Activated CD4-positive, alpha-beta T cell treated with anti-CD3 and anti-CD28 coated beads for 36 hours (primary cell): ENCODE measurements at regions of chr18 and their contacts with region 1.

Region 1: DNA sequence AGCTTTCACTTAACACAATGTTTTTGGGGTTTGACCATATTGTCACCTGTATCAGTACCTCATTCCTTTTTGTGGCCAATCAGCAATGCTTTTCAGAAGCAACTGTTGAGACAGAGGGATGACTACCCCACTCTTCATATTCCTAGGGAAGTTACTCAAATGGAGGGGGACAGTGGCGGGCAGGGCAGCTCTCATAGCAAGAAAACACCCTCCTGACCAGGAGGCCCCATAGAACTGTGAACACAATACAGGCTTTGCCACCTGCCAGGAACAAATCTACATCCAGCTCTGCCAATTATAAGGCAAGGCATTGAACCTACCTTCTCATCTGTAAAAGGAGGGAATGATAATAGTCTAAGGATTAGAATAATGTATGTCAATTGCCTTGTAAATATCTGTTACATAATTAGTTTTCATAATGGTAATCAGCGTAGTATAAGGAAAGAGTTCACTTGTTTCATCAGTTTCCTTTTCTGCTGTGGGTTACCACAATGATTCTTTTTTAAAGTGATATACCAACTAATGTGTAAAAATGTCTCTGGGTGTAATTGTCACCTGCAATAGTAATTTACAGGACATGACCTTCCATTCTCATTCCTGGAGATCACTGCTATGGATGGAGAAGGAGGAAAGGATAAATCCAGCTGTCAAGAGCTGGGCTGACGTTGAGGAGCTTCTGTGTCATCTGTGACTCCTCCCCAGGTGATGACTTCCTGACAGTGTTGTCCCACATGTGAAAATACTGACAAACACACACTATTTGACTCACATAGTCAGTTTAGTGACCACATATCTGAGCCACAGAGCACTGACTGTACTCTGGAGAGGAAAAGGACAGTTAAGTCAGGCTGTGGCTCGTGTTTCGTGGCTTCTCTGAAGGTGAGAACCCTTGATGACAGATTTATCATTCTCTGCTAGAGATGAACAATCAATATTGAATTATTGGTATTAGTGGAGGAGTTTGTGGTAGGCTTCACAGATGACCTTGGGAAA is 13.5 kb downstream of the ALPK2 start:
- DNase-seq: peak; percentile 87
- ATAC-seq: peak; percentile 95
- H3K4me3 Mint-ChIP-seq: peak overlapping the region; percentile 30
- H3K27ac Mint-ChIP-seq: peak overlapping the region; percentile 91
- H3K4me1 Mint-ChIP-seq: peaks cover 46% of the 10 kb centered on the region
- H3K27me3 Mint-ChIP-seq: peaks cover 8% of the 10 kb centered on the region

Region 2: GRCh38 chr18:58135701-58136331 is 479.6 kb before region 1 on chr18:
- CTCF ChIA-PET with region 1: no interaction called
- POLR2A ChIA-PET with region 1: no interaction called
- intact Hi-C with region 1: no loop called
- DNase-seq: peak; percentile 72
- ATAC-seq: peak; percentile 84
- H3K4me3 Mint-ChIP-seq: no peak overlapping the region
- H3K27ac Mint-ChIP-seq: no peak overlapping the region
- H3K4me1 Mint-ChIP-seq: peaks cover 7% of the 10 kb centered on the region
- H3K27me3 Mint-ChIP-seq: peaks cover 7% of the 10 kb centered on the region

Region 3: DNA sequence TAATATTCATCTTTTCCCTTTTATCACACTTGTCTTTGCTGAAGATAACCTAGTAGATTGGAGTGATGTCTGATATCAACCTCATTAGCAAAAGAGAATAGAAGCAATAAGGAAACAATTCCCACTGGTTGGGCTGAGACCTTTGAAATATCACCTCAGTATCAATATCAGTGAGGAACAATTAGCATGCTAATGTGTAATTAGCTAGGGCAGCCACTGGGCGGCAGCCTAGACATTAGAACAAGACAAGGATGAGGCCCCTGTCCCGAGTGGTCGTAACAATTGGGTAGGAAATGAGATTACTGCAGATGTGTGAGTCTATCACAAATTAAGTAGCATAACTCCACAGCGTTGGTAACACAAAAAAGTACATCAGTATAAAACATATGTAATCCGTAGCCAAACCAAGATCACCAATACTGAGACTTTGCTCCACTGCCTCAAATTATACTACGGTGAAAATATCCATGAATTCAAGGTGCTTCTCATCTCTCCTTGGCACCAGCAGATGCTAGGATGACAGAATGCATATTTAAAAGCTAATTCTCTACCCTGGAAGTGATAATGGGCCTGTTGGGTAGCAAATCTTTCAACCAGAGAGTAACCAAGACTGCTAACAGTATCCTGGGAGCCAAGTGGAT is 85.6 kb before region 1 on chr18:
- CTCF ChIA-PET with region 1: no interaction called
- POLR2A ChIA-PET with region 1: interaction called, 3 read pairs
- intact Hi-C with region 1: loop called in 1 of 2 experiments (anchors 5 kb)
- DNase-seq: peak; percentile 83
- ATAC-seq: peak; percentile 39
- H3K4me3 Mint-ChIP-seq: no peak overlapping the region
- H3K27ac Mint-ChIP-seq: no peak overlapping the region
- H3K4me1 Mint-ChIP-seq: peaks cover 30% of the 10 kb centered on the region
- H3K27me3 Mint-ChIP-seq: peaks cover 13% of the 10 kb centered on the region

Region 4: DNA sequence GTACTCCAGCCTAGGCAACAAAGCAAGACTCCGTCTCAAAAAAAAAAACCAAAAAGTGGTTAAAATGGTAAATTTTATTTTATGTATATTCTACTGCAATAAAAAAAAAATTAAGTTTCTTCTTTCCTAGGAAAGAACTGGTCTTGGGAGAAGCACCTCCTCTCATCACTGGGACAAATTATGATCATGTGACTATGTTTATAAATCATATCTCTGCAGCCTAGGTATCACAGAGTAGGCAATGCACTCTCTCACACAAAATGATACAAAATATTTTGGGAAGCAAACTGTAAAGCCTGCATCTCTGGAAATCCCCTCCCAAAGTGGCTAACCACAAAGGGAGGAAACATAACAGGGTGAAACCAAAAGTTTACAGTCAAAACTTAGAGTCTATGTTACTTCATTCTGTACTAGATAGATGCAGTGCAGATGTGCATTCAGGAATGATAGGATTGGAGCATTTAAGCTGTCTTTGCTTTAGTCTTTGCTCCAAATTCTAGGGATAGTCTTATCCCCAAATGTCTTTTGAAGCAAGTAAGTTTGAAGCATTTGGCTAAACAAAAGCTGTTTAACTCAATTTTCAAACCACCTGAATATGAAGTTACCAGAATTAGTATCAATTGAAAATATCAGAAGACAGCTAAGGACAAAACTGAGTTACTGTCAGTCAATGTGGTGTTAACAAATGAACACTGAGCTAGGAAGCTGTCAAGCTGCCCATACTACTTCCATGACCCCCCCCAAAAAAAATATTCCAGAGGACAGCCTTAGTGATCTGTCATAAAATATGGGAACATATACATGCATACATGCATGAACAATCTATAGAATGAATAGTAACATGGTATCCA is 34.8 kb after region 1 on chr18:
- CTCF ChIA-PET with region 1: no interaction called
- POLR2A ChIA-PET with region 1: no interaction called
- intact Hi-C with region 1: loop called in 1 of 2 experiments (anchors 1 kb)
- DNase-seq: peak; percentile 64
- ATAC-seq: peak; percentile 92
- H3K4me3 Mint-ChIP-seq: no peak overlapping the region
- H3K27ac Mint-ChIP-seq: no peak overlapping the region
- H3K4me1 Mint-ChIP-seq: peaks cover 59% of the 10 kb centered on the region
- H3K27me3 Mint-ChIP-seq: peaks cover 3% of the 10 kb centered on the region

Region 5: DNA sequence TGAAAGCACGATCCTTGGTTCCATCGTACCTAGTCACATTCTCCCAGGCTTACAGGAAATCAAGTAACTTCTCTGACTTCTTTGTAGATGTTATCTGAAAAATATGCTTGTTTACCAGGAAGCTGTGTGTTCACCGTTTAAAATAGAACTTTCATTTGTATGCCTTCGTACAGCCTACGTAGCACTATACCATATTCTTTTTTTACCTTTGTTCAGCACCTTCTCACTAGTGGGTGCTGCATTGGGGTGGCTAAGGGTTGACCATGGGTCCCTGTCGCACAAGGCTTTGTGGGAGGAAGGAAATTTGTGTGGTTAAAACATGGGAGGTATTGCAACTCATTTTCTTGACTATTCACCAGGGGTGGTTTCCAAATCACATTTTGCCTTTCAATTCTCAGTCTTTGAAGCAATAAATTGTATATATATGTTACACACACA is 72.5 kb after region 1 on chr18:
- CTCF ChIA-PET with region 1: interaction called, 3 read pairs
- POLR2A ChIA-PET with region 1: interaction called, 10 read pairs
- intact Hi-C with region 1: loop called (anchors 1 to 5 kb)
- DNase-seq: peak; percentile 69
- ATAC-seq: peak; percentile 79
- H3K4me3 Mint-ChIP-seq: peak overlapping the region; percentile 64
- H3K27ac Mint-ChIP-seq: peak overlapping the region; percentile 92
- H3K4me1 Mint-ChIP-seq: peaks cover 83% of the 10 kb centered on the region
- H3K27me3 Mint-ChIP-seq: no peaks in the 10 kb centered on the region

Region 6: DNA sequence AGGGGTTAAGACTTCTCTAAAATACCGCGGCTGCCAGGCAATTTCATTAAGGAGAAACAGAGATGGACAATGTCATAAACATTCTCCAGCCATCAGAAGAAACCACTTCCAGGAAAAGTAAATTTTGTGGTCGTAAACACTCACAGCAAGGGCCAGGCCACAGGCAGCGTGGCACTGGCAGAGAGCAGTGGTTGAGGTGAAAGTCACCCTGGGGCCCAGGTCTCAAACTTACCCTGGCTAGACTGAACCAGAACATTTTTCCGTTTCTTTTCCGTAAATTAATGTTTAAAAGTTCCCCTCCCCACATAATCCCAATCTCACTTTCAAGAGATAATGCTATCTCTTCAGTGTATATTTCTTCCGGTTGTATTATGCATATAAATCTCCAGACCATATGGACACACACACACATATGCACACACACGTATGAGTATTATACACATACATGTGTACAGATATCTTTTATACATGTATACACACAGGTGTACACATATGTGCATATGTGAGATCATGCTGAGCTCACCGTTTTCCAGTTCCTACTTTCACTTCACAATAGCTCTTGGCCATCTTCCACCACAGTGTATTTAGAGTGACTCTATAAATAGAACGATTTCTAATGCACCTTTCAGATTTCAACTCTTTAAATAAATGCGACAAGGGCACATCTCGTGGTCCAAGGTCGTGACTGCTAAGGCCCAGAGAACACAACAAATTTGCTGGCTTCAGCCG is 146.0 kb after region 1 on chr18:
- CTCF ChIA-PET with region 1: interaction called, 5 read pairs
- POLR2A ChIA-PET with region 1: no interaction called
- intact Hi-C with region 1: loop called in 1 of 2 experiments (anchors 5 kb)
- DNase-seq: peak; percentile 27
- ATAC-seq: peak; percentile 53
- H3K4me3 Mint-ChIP-seq: no peak overlapping the region
- H3K27ac Mint-ChIP-seq: peak overlapping the region; percentile 2
- H3K4me1 Mint-ChIP-seq: peaks cover 13% of the 10 kb centered on the region
- H3K27me3 Mint-ChIP-seq: peaks cover 18% of the 10 kb centered on the region